ENCODE measurements at regions of chr14 and their contacts with region 1.

Region 1: DNA sequence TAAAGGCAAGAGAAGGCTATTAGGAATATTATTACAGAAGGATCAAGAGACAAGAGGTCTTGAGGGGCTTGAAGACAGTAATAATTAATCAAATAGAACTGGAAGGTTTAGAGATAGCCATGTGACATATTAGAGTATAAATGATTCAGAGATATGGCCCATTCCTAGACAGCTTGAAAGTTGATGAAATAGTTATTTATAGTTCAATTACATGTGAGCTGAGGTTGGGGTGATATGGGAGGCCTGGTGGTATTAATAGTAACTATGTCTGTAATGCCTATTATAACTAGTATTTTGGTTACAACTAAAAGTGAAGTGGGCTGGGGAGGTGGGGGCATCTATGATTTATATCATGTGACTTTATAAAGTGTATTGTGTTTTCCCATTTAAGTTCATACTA is 14.1 kb upstream of the MIS18BP1 start:
- DNase-seq: no peak
- H3K4me3 ChIP-seq: no peak overlapping the region
- H3K27ac ChIP-seq: no peak overlapping the region
- H3K4me1 ChIP-seq: peaks cover 0 to 3% (median 0%) of the 10 kb centered on the region in 4 experiments; a peak in 1 of 7 replicates
- H3K27me3 ChIP-seq: no peaks in the 10 kb centered on the region
- CTCF ChIP-seq: no peak
- EP300 ChIP-seq: no peak
- POLR2A ChIP-seq: no peak
- RAD21 ChIP-seq: no peak

Region 2: DNA sequence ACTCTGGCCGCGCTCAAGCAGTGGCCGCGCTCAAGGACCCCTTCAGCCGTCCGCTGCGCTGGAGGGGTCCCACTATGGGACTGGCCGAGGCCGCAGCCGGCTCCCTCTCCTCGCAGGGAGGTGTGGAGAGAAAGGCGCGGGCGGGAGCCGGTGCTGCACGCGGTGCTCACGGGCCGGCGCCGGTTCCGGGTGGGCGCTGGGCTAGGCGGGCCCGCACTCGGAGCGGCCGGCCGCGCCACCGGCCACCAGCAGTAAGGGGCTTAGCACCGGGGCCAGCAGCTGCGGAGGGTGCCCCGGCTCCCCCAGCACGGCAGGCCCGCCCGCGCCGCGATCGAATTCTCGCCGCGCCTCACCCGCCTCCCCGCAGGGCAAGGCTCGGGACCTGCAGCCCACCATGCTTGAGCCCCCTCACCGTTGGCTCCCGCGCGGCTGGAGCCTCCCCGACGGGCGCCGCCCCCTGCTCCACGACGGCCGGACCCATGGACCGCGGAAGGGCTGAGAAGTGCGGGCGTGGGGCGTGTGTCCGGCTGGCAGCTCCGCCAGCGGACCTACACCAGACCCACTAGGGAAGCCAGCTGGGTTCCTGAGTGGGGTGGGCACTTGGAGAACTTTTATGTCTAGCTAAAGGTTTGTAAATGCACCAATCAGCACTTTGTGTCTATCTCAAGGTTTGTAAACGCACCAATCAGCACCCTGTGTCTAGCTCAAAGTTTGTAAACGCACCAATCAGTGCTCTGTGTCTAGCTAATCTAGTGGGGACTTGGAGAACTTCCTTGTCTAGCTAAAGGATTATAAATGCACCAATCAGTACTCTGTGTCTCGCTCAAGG is 354.8 kb before region 1 on chr14:
- CTCF ChIA-PET with region 1: interaction called, 19 read pairs
- POLR2A ChIA-PET with region 1: interaction called, 3 read pairs
- DNase-seq: no peak
- H3K4me3 ChIP-seq: no peak overlapping the region
- H3K27ac ChIP-seq: no peak overlapping the region
- H3K4me1 ChIP-seq: peaks cover 0 to 2% (median 0%) of the 10 kb centered on the region in 4 experiments; a peak in 1 of 7 replicates
- H3K27me3 ChIP-seq: no peaks in the 10 kb centered on the region
- CTCF ChIP-seq: no peak
- EP300 ChIP-seq: no peak
- POLR2A ChIP-seq: no peak
- RAD21 ChIP-seq: no peak

Region 3: GRCh38 chr14:45156060-45156459 is 111.0 kb before region 1 on chr14:
- CTCF ChIA-PET with region 1: interaction called, 10 read pairs
- POLR2A ChIA-PET with region 1: interaction called, 3 read pairs
- DNase-seq: no peak
- H3K4me3 ChIP-seq: no peak overlapping the region
- H3K27ac ChIP-seq: no peak overlapping the region
- H3K4me1 ChIP-seq: no peaks in the 10 kb centered on the region
- H3K27me3 ChIP-seq: no peaks in the 10 kb centered on the region
- CTCF ChIP-seq: no peak
- EP300 ChIP-seq: no peak
- POLR2A ChIP-seq: no peak
- RAD21 ChIP-seq: no peak

Region 4: GRCh38 chr14:45227566-45227965 is 39.5 kb before region 1 on chr14:
- CTCF ChIA-PET with region 1: interaction called, 16 read pairs
- POLR2A ChIA-PET with region 1: no interaction called
- DNase-seq: no peak
- H3K4me3 ChIP-seq: no peak overlapping the region
- H3K27ac ChIP-seq: no peak overlapping the region
- H3K4me1 ChIP-seq: no peaks in the 10 kb centered on the region
- H3K27me3 ChIP-seq: no peaks in the 10 kb centered on the region
- CTCF ChIP-seq: no peak
- EP300 ChIP-seq: no peak
- POLR2A ChIP-seq: no peak
- RAD21 ChIP-seq: no peak

Region 5: DNA sequence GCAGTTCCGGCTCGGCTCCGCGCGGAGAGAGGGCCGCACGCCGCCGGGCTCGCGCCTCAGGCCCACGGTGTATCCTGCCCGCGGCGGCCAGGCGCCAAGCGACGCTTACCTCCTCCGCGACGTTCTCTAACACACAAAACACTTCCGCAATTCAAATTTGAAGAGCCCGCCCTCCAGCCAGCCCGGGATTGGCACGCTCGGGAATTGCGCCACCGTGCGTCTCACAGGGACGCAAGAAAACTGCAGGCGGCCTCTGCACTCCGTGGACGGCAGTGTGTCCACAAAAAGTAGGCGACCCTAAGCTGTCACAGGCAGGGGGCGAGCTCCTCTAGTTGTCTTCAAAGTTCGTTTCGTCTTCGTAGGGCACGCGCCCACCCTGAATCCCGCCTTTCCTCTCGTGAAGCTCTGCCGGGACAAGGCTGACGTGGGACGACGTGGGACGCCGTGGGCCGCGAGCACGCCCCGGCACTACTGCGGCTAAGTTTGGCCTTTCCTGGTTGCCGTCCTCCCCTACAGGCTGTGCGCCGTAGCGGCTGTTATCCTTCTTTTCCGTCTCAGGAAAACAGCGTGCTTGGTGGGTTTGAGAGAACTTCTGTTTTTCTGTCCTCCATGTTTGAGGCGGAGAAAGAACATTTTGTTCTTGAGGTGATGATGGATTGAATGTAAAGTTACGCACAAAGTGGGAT is 13.9 kb before region 1 on chr14 and contains the start of gene MIS18BP1:
- CTCF ChIA-PET with region 1: interaction called, 85 read pairs
- POLR2A ChIA-PET with region 1: interaction called, 4 read pairs
- DNase-seq: peak; percentile 83 to 91
- H3K4me3 ChIP-seq: peak within 1 kb of the TSS; percentile 93 to 99 (median 94)
- H3K27ac ChIP-seq: peak within 1 kb of the TSS; percentile 70
- H3K4me1 ChIP-seq: peaks cover 0 to 5% (median 0%) of the 10 kb centered on the region in 4 experiments; a peak in 1 of 7 replicates
- H3K27me3 ChIP-seq: no peaks in the 10 kb centered on the region; a peak in 1 of 7 replicates
- CTCF ChIP-seq: peak; percentile 70 to 77 (median 72)
- EP300 ChIP-seq: no peak
- POLR2A ChIP-seq: peak; percentile 79 to 90
- RAD21 ChIP-seq: peak; percentile 35 to 51
- total RNA-seq, gene MIS18BP1: 73.0 and 80.5 TPM in 2 replicates

Measured in H1 (cell line).